ENCODE measurements at regions of chr3 and their contacts with region 1.

Region 1: GRCh38 chr3:71380096-71380495 is 203.4 kb downstream of the FOXP1 start:
- DNase-seq: peak in 1 of 2 donors; percentile 21
- ATAC-seq: peak in 6 of 8 donors; percentile 41 to 90 (median 70)
- H3K4me3 ChIP-seq: no peak overlapping the region
- H3K27ac ChIP-seq: no peak overlapping the region
- H3K4me1 ChIP-seq: peaks cover 0 to 31% (median 13%) of the 10 kb centered on the region in 9 donors
- H3K27me3 ChIP-seq: no peaks in the 10 kb centered on the region
- CTCF ChIP-seq: peak in 4 of 9 donors; percentile 11 to 29 (median 26)

Region 2: GRCh38 chr3:71570546-71570945 is 190.4 kb after region 1 on chr3:
- intact Hi-C with region 1: loop called in 1 of 10 experiments (anchors 5 kb)
- DNase-seq: no peak
- ATAC-seq: no peak
- H3K4me3 ChIP-seq: no peak overlapping the region
- H3K27ac ChIP-seq: no peak overlapping the region
- H3K4me1 ChIP-seq: peaks cover 0 to 19% (median 0%) of the 10 kb centered on the region in 9 donors
- H3K27me3 ChIP-seq: no peaks in the 10 kb centered on the region
- CTCF ChIP-seq: no peak

Region 3: DNA sequence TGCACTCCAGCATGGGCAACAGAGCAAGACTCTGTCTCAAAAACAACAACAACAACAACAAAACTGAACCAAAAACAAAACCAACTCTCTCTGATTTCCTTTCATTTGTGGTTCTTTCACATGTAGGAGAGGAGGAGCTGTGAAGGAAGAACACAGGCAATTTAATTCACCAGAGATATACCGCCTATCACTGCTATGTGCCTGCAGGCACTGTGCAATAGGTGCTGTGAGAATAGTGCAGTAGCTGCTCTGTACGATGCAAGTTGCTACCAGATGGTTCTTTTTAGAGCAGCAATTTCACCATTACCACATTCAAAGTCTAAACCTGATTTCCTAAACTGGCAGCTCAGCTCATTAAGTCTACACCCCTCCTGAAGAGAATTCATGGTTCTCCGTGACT is 416.2 kb after region 1 on chr3:
- intact Hi-C with region 1: no loop called
- DNase-seq: no peak
- ATAC-seq: no peak
- H3K4me3 ChIP-seq: no peak overlapping the region
- H3K27ac ChIP-seq: no peak overlapping the region
- H3K4me1 ChIP-seq: no peaks in the 10 kb centered on the region
- H3K27me3 ChIP-seq: peaks cover 0 to 44% (median 23%) of the 10 kb centered on the region in 7 donors
- CTCF ChIP-seq: no peak

Region 4: DNA sequence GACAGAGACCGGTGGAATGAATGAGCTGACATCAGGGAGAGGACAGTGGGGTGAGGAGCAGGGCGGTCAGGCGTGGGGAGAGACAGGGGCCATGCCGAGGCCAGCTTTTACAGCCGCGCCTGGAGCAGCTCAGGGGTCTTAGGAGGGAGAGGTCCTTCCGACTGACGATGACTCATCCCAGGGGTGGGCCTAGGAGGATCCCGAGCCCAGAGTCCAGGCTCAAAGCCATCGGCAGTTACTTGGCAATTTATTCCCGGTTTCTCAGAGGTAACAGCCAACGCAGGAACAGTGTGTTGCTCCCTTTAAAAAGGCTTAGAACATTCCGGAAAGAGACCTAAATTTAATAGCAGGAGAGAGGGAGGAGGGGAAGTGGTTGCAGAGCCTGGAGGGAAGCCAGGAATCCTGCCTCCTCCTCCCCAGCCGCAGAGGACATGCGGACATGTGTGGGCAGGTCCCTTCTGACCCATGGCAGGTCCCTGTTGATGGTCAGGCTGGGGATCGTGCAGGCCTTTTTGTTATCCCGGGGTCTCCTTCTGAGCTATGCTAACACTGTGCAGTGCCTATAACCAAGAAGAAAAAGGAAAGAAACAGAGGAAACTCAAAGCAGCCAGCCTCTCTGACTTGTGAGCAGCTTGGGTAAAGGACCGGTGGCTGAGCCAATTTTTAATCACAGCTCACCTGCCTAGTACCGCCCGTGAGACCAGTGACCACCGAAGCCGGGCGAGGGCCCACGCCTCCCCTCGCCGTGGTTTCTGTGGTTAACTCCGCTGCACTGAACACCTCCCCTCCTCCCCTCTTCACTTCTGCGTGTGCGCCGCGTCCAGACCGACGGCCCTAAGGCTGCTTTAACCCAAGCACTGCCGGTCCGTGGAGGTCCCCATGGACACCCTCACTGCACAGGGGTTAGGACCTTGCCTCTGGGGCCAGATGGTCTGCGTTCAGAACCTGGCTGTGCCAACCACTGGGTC is 797.3 kb after region 1 on chr3:
- intact Hi-C with region 1: no loop called
- DNase-seq: peak; percentile 35 to 56
- ATAC-seq: peak; percentile 42 to 82 (median 74)
- H3K4me3 ChIP-seq: peak overlapping the region in 6 of 10 donors; percentile 8 to 38 (median 24)
- H3K27ac ChIP-seq: peak overlapping the region in 2 of 10 donors; percentile 2 to 69
- H3K4me1 ChIP-seq: peaks cover 0 to 52% (median 28%) of the 10 kb centered on the region in 9 donors
- H3K27me3 ChIP-seq: peaks cover 0 to 15% (median 0%) of the 10 kb centered on the region in 7 donors
- CTCF ChIP-seq: no peak

Measured in heart right ventricle (tissue), 16 donors.